Activated CD8-positive, alpha-beta T cell treated with anti-CD3 and anti-CD28 coated beads, Interleukin-2, amount 10 ng/mL, durations not matched to agents 7 days and 5 days (primary cell): ENCODE measurements at regions of chr1 and their contacts with region 1.

Region 1: DNA sequence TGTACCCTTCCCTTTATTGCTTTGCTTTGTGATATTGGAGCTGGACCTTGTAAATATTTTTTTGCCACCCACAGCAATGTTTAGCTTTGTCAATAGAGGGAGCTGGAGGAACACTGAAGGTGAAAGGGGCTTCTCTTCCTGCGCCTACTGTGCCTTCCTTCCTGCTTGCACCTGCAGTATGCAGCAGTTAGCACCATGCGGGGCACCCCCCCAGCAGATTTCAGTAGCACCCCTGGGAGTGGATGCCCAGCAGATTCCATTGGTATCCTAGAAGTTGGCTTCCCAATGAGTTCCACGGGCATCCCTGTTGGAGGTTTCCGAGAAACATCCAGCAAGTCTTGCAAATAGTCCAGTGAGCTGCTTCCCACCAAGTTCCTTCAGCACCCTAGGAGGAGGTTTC is 25.6 kb downstream of the S100A10 start:
- DNase-seq: peak; percentile 80
- ATAC-seq: peak; percentile 97
- H3K4me3 Mint-ChIP-seq: no peak overlapping the region
- H3K27ac Mint-ChIP-seq: peak overlapping the region; percentile 22
- H3K4me1 Mint-ChIP-seq: peaks cover 23% of the 10 kb centered on the region
- H3K27me3 Mint-ChIP-seq: peaks cover 7% of the 10 kb centered on the region

Region 2: GRCh38 chr1:151888972-151889570 is 79.0 kb before region 1 on chr1:
- CTCF ChIA-PET with region 1: interaction called, 31 read pairs
- POLR2A ChIA-PET with region 1: no interaction called
- DNase-seq: no peak
- ATAC-seq: peak; percentile 57
- H3K4me3 Mint-ChIP-seq: no peak overlapping the region
- H3K27ac Mint-ChIP-seq: no peak overlapping the region
- H3K4me1 Mint-ChIP-seq: peaks cover 17% of the 10 kb centered on the region
- H3K27me3 Mint-ChIP-seq: no peaks in the 10 kb centered on the region

Region 3: GRCh38 chr1:151934048-151934493 is 34.0 kb before region 1 on chr1:
- CTCF ChIA-PET with region 1: interaction called, 48 read pairs
- POLR2A ChIA-PET with region 1: no interaction called
- DNase-seq: peak; percentile 63
- ATAC-seq: peak; percentile 88
- H3K4me3 Mint-ChIP-seq: no peak overlapping the region
- H3K27ac Mint-ChIP-seq: no peak overlapping the region
- H3K4me1 Mint-ChIP-seq: peaks cover 2% of the 10 kb centered on the region
- H3K27me3 Mint-ChIP-seq: peaks cover 17% of the 10 kb centered on the region

Region 4: GRCh38 chr1:151945725-151946364 is 22.2 kb before region 1 on chr1:
- CTCF ChIA-PET with region 1: interaction called, 19 read pairs
- POLR2A ChIA-PET with region 1: no interaction called
- DNase-seq: peak; percentile 82
- ATAC-seq: peak; percentile 81
- H3K4me3 Mint-ChIP-seq: peak overlapping the region; percentile 40
- H3K27ac Mint-ChIP-seq: peak overlapping the region; percentile 73
- H3K4me1 Mint-ChIP-seq: peaks cover 29% of the 10 kb centered on the region
- H3K27me3 Mint-ChIP-seq: peaks cover 6% of the 10 kb centered on the region

Region 5: GRCh38 chr1:152034646-152035405 is 66.8 kb after region 1 on chr1:
- CTCF ChIA-PET with region 1: interaction called, 23 read pairs
- POLR2A ChIA-PET with region 1: interaction called, 3 read pairs
- DNase-seq: peak; percentile 83
- ATAC-seq: peak; percentile 81
- H3K4me3 Mint-ChIP-seq: peak overlapping the region; percentile 98
- H3K27ac Mint-ChIP-seq: peak overlapping the region; percentile 98
- H3K4me1 Mint-ChIP-seq: peaks cover 43% of the 10 kb centered on the region
- H3K27me3 Mint-ChIP-seq: no peaks in the 10 kb centered on the region